ENCODE measurements at regions of chr7 and their contacts with region 1.

Region 1: DNA sequence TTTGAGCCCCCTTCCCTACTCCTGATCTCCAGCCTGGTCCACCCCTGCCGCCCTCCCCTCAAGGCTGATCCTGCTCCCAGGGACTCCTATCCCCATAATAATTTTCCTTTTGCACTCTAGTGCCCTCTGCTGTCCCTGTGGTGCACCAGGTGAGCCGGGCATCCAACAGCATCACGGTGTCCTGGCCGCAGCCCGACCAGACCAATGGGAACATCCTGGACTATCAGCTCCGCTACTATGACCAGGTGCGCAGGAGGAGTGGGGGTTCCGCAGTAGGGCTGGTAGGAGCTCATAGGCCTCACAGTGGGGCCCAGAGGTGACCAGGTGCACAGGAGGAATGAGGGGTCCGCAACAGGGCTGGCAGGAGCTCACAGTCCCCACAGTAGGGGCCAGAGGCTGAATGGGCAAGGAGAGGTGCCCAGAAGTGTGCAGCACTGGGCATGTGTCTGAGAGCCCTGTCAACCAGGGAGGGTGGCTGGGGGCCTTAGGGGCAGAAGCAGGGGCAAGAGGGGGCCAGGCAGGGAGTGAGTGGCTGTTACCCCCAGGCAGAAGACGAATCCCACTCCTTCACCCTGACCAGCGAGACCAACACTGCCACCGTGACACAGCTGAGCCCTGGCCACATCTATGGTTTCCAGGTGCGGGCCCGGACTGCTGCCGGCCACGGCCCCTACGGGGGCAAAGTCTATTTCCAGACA is 11.6 kb downstream of the EPHB6 start:
- DNase-seq: peak; percentile 42
- H3K4me3 Mint-ChIP-seq: no peak overlapping the region
- H3K27ac Mint-ChIP-seq: peak overlapping the region; percentile 42
- H3K4me1 Mint-ChIP-seq: no peaks in the 10 kb centered on the region
- H3K27me3 Mint-ChIP-seq: no peaks in the 10 kb centered on the region

Region 2: DNA sequence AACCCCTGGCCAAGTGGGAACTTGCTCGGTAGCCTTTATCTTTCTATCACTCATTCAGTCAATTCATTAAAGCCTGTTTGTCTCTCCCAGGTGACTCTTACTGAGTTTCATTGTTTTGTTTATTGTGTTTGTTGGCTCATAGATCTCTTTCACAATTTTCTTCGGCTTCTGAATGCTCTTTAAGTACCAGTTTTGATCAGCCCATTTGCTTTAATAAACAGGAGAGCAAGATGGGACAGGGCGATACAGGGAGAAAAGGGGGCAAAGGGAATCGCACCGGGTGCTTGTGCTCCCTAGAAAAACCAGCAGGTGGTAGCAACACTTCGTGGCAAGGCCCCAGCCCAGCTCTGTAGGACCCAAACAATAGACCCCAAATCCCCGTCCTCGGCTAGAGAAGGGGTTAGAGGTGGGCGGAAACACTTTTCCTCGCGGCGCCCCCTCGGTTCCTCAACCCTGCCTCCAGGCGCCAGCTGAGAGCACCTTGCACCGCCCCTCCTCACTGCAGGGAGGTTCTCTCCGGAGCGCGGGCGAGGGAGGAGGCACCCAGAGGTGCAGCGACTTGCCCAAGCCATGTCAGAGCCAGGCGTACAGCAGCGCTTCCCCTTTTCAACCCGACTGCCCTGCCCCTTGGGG is 12.7 kb before region 1 on chr7:
- CTCF ChIA-PET with region 1: interaction called, 29 read pairs
- DNase-seq: peak; percentile 81
- H3K4me3 Mint-ChIP-seq: peak overlapping the region; percentile 92
- H3K27ac Mint-ChIP-seq: peak overlapping the region; percentile 84
- H3K4me1 Mint-ChIP-seq: peaks cover 26% of the 10 kb centered on the region
- H3K27me3 Mint-ChIP-seq: peaks cover 39% of the 10 kb centered on the region

Measured in activated naive CD4-positive, alpha-beta T cell treated with anti-CD3 and anti-CD28 coated beads, Interleukin-2, amount 10 ng/mL, durations not matched to agents 7 days and 5 days (primary cell).